ENCODE measurements at regions of chr21 and their contacts with region 1.

Region 1: DNA sequence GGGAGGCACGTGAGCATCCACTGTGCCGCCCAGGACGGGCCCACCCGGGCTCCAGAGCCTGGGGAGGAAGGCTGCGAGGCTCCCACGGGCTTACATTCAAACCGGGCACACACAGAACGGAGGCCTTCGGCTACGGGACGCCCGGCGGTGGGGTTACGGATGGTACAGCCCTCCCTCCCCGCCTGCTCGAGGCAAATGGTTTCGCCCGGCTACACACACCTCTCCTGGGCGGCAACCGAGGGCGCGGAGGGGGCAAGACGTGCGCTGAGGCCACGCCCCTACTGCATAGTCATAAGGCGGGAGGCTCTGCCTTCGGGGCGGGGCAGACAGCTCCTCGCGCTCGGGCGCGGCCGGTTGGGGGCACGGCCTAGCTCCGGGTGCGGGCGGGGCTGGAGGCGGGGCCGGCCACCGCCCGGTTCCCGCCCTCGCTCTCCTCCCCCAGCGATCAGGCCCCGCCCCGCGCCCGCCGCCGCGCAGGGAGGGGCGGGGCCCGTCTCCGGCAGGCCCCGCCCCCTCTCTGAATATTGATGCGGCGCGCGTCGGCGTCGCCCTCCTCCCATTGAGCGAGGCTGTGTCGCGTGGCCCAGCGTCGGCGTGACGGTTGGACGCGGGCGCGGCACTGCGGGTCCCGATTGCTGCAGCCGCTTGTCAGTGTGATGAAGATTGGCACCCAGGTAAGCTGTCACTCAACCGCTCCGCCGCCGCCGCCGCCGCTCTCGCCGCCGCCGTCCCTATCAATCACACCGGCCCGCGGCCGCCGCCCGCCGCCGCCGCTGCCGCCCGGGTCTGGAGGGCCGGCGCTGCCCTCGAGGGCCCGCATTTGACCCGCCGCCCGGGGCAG is at the start of gene PKNOX1:
- DNase-seq: peak; percentile 99
- H3K4me3 Mint-ChIP-seq: peak within 1 kb of the TSS; percentile 87
- H3K27ac Mint-ChIP-seq: peak within 1 kb of the TSS; percentile 87
- H3K4me1 Mint-ChIP-seq: peaks cover 25% of the 10 kb centered on the region
- H3K27me3 Mint-ChIP-seq: no peaks in the 10 kb centered on the region
- total RNA-seq, gene PKNOX1: 25.1 and 28.8 TPM in 2 replicates

Region 2: DNA sequence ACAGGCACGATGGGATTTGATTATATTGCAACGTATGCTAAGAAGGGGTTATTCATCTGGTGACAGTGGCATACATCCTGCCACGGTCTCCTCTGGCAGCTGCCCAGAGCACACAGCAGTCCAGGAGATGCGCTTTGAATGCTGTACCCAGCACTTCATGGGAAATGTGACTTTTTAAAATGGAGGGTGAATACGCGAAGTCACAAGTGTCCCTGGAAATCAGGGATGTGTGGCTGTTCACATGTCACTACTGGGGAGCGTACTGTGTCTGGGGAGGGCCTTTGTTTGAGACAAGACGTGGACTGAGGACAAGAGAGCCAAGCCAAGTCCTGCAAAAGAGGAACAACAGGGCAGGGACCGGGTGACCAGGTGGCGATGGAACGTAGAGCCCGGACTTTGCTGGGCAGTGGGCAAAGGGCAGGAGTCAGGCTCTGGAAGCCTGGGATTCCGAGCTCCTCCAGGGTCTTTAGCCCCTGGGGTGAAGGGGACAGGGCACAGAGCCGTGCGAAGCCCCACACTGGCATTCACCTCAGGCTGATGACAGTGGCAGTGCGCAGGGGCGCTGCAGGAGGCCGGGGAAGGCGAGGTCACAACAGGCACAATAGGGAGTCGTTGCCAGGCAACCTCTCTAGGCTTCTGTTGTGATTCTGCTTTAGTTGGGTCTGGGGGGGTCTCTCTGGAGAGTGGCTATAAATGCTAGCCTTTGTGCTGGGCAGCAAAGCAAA is 952.7 kb before region 1 on chr21:
- intact Hi-C with region 1: no loop called
- DNase-seq: no peak
- H3K4me3 Mint-ChIP-seq: no peak overlapping the region
- H3K27ac Mint-ChIP-seq: no peak overlapping the region
- H3K4me1 Mint-ChIP-seq: no peaks in the 10 kb centered on the region
- H3K27me3 Mint-ChIP-seq: peaks cover 2% of the 10 kb centered on the region

Region 3: DNA sequence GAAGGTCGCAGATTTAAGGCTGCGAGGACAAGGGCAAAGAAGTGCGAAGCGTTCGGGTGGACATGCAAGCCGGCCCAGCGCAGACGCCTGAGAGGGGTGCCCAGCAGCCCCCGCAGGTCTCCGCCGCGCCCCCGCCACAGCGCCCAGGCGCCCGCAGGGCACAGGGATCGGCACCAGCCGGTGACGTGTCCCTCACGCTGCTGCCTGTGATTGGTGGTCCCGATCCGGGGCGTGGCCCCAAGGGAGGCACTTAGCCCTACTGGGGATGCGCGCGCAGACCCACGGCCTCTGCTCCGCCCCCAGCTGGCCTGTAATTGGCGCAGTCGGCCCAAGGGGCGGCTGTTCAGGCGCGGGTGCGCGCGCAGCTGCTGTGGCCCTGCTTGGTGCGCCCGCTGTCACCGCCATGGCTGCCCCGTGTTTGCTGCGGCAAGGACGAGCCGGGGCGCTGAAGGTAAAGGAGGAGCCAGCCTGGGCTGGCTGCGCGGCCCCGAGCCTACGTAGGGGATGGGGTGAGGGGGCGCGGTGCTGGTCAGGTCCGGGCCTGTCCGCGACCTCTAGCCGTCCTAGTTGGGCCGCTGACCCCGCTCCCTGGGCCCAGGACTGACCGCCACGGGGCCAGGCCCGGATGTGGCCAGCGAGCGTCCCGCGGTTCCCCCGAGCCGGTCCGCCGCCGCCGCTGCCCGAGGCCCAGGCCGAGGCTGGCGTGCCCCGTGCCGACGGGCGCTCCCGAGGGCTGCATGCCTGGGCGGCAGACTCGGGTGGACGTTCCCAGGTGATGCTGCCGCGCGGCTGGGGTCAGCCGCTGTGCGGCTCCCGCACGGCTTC is 81.1 kb before region 1 on chr21 and contains the start of gene NDUFV3:
- intact Hi-C with region 1: loop called (anchors 1 kb)
- DNase-seq: peak; percentile 99
- H3K4me3 Mint-ChIP-seq: peak within 1 kb of the TSS; percentile 89
- H3K27ac Mint-ChIP-seq: peak within 1 kb of the TSS; percentile 91
- H3K4me1 Mint-ChIP-seq: peaks cover 12% of the 10 kb centered on the region
- H3K27me3 Mint-ChIP-seq: no peaks in the 10 kb centered on the region
- total RNA-seq, gene NDUFV3: 41.9 and 44.4 TPM in 2 replicates

Region 4: GRCh38 chr21:42923541-42924432 is 50.4 kb before region 1 on chr21:
- intact Hi-C with region 1: loop called (anchors 1 kb)
- DNase-seq: peak; percentile 74
- H3K4me3 Mint-ChIP-seq: peak overlapping the region; percentile 35
- H3K27ac Mint-ChIP-seq: peak overlapping the region; percentile 67
- H3K4me1 Mint-ChIP-seq: peaks cover 16% of the 10 kb centered on the region
- H3K27me3 Mint-ChIP-seq: no peaks in the 10 kb centered on the region

Region 5: DNA sequence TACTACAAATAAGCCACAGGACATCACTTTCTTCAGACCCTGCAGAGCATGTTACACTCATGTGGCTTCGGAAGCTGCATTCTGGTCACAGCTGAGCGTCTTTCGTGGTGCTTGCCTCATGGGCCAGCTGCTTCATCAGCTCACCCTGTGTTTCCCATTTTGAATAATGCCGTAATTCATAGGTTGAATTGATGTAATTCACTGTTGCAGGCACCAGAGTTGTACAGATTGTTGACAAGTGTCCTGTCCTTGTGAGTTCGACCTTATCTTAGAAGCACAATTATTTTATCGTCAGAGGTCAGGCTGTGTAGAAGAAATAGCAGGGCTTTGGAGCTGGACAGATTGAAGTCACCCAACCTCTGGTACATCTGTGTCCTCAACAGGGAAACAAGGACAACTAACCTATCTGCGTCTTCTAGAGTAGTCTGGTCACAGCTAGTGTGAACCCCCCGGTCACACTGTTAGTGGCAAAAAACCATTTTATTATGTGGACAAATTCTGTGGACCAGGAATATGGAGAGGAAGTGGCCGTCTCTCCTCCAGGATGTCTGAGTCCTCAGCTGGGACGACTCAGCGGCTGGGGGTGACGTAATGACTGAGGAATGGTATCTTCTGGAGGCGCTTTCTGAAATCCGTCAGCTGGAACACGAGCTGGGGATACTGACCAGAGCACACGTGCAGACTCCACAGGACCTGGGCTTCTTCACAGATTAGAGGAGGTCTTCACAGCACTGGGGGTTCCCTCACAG is 18.0 kb after region 1 on chr21:
- intact Hi-C with region 1: no loop called
- DNase-seq: no peak
- H3K4me3 Mint-ChIP-seq: no peak overlapping the region
- H3K27ac Mint-ChIP-seq: no peak overlapping the region
- H3K4me1 Mint-ChIP-seq: peaks cover 6% of the 10 kb centered on the region
- H3K27me3 Mint-ChIP-seq: no peaks in the 10 kb centered on the region

Measured in activated T-helper 1 cell treated with anti-CD3 and anti-CD28 coated beads, Interleukin-12 subunit alpha, Interleukin-12 subunit beta, Interleukin-2, Interleukin-4 antibody, amounts not matched to agents 30 ng/mL and 10 ng/mL and 1 ng/mL, durations not matched to agents 14 hours and 24 hours and 36 hours (primary cell).